GM12878 (cell line): ENCODE measurements at regions of chr14 and their contacts with region 1.

Region 1: DNA sequence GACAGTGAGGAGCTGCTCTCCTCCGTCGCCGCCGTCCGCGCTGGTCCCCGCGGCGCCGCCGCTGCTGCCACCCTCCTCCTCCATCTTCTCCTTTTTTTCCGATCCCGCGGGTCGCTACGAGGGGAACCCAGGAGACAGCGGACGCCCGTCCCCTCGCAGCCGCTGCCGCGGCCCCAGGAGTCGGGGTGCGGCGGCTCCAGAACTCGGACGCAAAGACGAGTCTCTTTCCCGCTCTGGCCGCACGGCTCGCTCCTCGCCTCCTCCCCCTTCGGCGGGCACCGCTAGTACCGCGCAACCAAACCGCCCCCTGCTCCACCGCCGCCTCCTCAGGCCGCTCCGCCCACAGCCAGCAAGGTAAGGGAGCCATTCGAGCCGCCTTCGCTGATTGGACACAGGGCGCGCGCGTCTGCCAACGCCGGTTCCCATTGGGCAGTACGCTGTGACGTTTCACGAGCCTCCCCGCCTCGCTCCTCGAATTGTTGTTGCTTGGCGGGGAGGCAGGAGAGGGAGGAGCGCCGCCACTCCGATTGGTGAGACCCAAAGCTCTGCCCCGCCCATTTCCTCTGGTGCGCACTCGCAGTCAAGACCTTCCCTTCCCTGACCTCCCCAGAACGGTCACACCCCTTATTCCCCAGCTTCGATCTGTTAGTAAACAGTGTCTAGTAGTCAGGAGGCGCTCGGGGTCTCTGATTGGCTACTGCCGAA is at the start of gene RPS6KA5:
- DNase-seq: peak; percentile 100
- ATAC-seq: peak; percentile 90
- H3K4me3 ChIP-seq: peak within 1 kb of the TSS; percentile 87
- H3K27ac ChIP-seq: peak within 1 kb of the TSS; percentile 72
- H3K4me1 ChIP-seq: peaks cover 11% of the 10 kb centered on the region
- H3K27me3 ChIP-seq: no peaks in the 10 kb centered on the region
- CTCF ChIP-seq: no peak; a peak in 2 of 6 replicates
- EP300 ChIP-seq: peak in 1 of 2 experiments; percentile 53; a peak in 2 of 4 replicates
- POLR2A ChIP-seq: peak; percentile 75
- RAD21 ChIP-seq: no peak
- polyA plus RNA-seq, gene RPS6KA5: 1.4 to 1.5 TPM

Region 2: DNA sequence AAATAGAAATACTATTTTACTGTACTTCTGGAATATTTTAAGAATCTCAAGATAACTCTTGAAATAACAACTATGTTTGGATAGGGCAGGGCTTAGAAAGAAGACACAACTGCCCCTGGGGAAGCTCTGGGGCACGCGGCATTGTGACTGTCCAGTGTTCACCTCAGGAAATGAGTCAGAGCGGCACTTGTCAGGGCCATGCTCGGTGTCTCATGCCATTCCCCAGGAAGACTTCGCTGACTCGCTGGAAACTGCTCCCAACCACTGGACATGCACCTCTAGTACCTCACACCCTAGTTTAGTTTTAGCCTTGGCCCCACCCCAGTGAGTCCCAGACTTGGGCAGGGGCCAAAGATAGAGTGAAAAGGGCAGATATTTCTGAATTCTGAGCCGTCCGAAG is 436.3 kb before region 1 on chr14:
- CTCF ChIA-PET with region 1: no interaction called
- POLR2A ChIA-PET with region 1: no interaction called
- RAD21 ChIA-PET with region 1: no interaction called
- SMC1A ChIA-PET with region 1: no interaction called
- in situ Hi-C with region 1: no loop called
- intact Hi-C with region 1: no loop called
- DNase-seq: no peak
- ATAC-seq: no peak
- H3K4me3 ChIP-seq: no peak overlapping the region
- H3K27ac ChIP-seq: no peak overlapping the region
- H3K4me1 ChIP-seq: no peaks in the 10 kb centered on the region
- H3K27me3 ChIP-seq: peaks cover 0 to 3% of the 10 kb centered on the region in 2 experiments; a peak in 2 of 4 replicates
- CTCF ChIP-seq: no peak
- EP300 ChIP-seq: no peak
- POLR2A ChIP-seq: no peak
- RAD21 ChIP-seq: no peak

Region 3: DNA sequence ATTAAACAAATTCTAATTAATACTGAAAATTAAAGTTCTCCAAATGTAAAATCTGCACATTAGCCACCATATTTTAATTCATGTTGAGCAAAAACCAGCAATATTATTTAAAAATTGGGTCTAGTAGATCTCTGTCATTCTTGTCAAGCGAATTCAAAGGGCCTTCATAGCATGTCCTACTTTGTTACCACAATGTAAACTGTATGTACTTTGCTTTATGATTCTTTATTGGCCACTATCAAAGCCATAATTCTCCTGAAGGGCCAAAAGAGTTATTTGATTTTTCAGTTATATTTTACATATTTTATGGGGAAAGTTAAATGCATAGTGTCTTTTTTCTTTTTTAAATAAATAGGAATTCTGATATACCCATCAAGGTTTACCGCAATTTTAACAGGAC is 118.0 kb before region 1 on chr14:
- CTCF ChIA-PET with region 1: no interaction called
- POLR2A ChIA-PET with region 1: no interaction called
- RAD21 ChIA-PET with region 1: no interaction called
- SMC1A ChIA-PET with region 1: no interaction called
- in situ Hi-C with region 1: no loop called
- intact Hi-C with region 1: no loop called
- DNase-seq: no peak
- ATAC-seq: no peak
- H3K4me3 ChIP-seq: no peak overlapping the region
- H3K27ac ChIP-seq: no peak overlapping the region
- H3K4me1 ChIP-seq: no peaks in the 10 kb centered on the region
- H3K27me3 ChIP-seq: no peaks in the 10 kb centered on the region
- CTCF ChIP-seq: no peak
- EP300 ChIP-seq: no peak
- POLR2A ChIP-seq: no peak
- RAD21 ChIP-seq: no peak

Region 4: DNA sequence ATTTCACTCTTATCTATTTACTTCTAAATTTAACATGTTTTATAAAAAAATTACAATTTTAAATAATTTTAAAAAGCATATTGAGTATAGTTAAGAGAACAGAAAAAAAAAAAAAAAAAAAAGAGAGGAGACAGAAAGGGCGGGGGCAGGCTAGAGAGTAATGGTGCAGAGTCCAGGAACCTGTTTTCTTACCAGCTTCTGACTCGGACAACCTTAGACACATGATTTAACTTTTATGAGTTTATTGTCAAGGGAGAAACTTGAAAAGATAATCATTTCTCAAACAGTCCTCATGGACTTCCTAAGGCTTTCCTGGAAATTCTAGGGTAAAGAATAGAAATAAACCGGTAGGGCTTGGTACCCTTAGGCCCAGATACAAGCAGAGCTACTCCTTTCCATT is 84.4 kb before region 1 on chr14:
- CTCF ChIA-PET with region 1: no interaction called
- POLR2A ChIA-PET with region 1: no interaction called
- RAD21 ChIA-PET with region 1: no interaction called
- SMC1A ChIA-PET with region 1: no interaction called
- in situ Hi-C with region 1: no loop called
- intact Hi-C with region 1: no loop called
- DNase-seq: no peak
- ATAC-seq: no peak
- H3K4me3 ChIP-seq: no peak overlapping the region
- H3K27ac ChIP-seq: no peak overlapping the region
- H3K4me1 ChIP-seq: no peaks in the 10 kb centered on the region
- H3K27me3 ChIP-seq: no peaks in the 10 kb centered on the region
- CTCF ChIP-seq: no peak
- EP300 ChIP-seq: no peak
- POLR2A ChIP-seq: no peak
- RAD21 ChIP-seq: no peak

Region 5: GRCh38 chr14:91009501-91010152 is 50.9 kb before region 1 on chr14:
- CTCF ChIA-PET with region 1: interaction called, 14 read pairs
- POLR2A ChIA-PET with region 1: interaction called, 16 read pairs
- RAD21 ChIA-PET with region 1: interaction called, 16 read pairs
- SMC1A ChIA-PET with region 1: interaction called, 24 read pairs
- in situ Hi-C with region 1: no loop called
- intact Hi-C with region 1: loop called (anchors 5 kb)
- DNase-seq: peak; percentile 85
- ATAC-seq: peak; percentile 92
- H3K4me3 ChIP-seq: peak overlapping the region; percentile 37
- H3K27ac ChIP-seq: peak overlapping the region; percentile 78
- H3K4me1 ChIP-seq: peaks cover 30% of the 10 kb centered on the region
- H3K27me3 ChIP-seq: no peaks in the 10 kb centered on the region
- CTCF ChIP-seq: no peak
- EP300 ChIP-seq: peak; percentile 23 to 32; a peak in 1 of 4 replicates
- POLR2A ChIP-seq: no peak
- RAD21 ChIP-seq: peak; percentile 2; the same call in 1 of the 2 replicates

Region 6: DNA sequence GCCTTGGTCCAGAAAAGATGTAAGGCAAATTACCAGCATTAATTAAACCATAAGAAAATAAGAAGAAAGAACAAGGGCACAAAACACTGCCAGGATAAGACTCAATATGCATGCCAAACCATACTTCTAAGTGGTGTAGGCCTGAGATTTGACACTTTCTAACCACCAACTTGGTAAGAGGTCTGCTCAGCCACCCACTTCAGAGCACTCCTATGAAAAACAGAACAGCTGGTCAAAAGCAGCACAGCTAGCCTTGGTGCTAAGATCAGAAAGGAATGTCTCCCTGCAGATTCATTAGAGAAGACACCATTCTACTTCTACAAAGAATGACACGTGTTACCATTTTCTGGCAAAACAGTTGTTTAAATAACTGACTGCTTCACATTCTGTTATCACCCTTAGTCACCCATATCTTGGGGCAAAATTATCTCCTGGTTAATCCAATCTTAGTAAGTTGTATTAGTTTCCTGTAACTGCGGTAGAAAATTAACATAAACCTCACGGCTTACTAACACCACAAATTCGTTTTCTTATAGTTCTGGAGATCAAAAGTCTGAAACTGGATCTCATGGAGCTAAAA is 13.2 kb before region 1 on chr14:
- CTCF ChIA-PET with region 1: interaction called, 10 read pairs
- POLR2A ChIA-PET with region 1: interaction called, 4 read pairs
- RAD21 ChIA-PET with region 1: interaction called, 7 read pairs
- SMC1A ChIA-PET with region 1: interaction called, 16 read pairs
- in situ Hi-C with region 1: no loop called
- intact Hi-C with region 1: no loop called
- DNase-seq: no peak
- ATAC-seq: peak; percentile 85
- H3K4me3 ChIP-seq: no peak overlapping the region
- H3K27ac ChIP-seq: no peak overlapping the region
- H3K4me1 ChIP-seq: no peaks in the 10 kb centered on the region
- H3K27me3 ChIP-seq: no peaks in the 10 kb centered on the region
- CTCF ChIP-seq: no peak
- EP300 ChIP-seq: no peak
- POLR2A ChIP-seq: no peak
- RAD21 ChIP-seq: no peak

Region 7: GRCh38 chr14:91114079-91115065 is 53.9 kb after region 1 on chr14:
- CTCF ChIA-PET with region 1: interaction called, 20 read pairs
- POLR2A ChIA-PET with region 1: interaction called, 94 read pairs
- RAD21 ChIA-PET with region 1: interaction called, 63 read pairs
- SMC1A ChIA-PET with region 1: interaction called, 68 read pairs
- in situ Hi-C with region 1: no loop called
- intact Hi-C with region 1: loop called (anchors 1 kb)
- DNase-seq: peak; percentile 86
- ATAC-seq: peak; percentile 88
- H3K4me3 ChIP-seq: peak overlapping the region; percentile 100
- H3K27ac ChIP-seq: peak overlapping the region; percentile 98
- H3K4me1 ChIP-seq: peaks cover 20% of the 10 kb centered on the region
- H3K27me3 ChIP-seq: no peaks in the 10 kb centered on the region
- CTCF ChIP-seq: no peak
- EP300 ChIP-seq: 0 out of 4 replicates have a peak, but pooled peaks of 1 of the 2 experiments have one; percentile 9
- POLR2A ChIP-seq: peak; percentile 82
- RAD21 ChIP-seq: 0 out of 2 replicates have a peak, but pooled peaks have one; percentile 2

Region 8: DNA sequence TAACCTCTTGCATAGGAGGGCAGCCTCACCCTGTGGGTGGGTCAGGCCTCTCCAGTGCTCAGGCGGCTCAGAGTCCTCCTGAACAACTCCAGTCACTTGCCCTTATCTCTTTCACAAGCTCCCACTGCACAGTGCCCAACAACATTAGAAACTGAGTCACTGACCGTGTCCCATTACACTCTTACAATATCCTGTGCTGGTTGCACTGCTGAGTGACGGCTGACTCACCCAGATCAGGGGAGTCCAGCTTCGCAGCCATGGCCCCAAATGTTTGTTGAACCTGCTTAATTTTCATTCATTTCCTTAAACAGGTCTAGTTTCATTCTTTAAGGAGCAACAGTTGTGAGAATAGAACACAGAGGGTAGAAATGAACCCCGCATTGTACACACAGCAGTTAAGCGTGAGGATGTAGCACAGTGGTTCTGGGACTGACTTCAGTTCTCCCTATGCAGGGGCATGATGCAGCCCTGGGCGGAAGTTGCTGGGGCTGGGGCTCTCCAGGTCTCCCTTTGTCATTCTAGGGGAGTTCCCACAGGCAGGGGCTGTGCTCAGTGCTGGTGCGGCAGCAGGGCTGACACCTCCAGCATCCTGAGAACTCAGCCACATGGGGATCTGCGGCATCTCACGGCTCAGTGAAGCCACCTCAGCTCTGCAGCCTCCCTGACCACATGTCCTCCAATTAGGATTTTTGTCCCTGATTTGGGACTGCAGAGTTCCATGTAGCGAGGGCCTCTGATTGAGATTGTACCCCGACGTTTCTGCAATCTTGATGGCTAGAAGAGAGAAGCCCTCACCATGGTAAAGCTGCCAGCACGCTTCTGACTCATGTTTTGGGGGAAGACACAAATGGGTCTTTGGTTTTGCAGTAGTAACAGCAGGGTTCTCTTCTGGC is 167.9 kb after region 1 on chr14:
- CTCF ChIA-PET with region 1: no interaction called
- POLR2A ChIA-PET with region 1: no interaction called
- RAD21 ChIA-PET with region 1: no interaction called
- SMC1A ChIA-PET with region 1: no interaction called
- in situ Hi-C with region 1: no loop called
- intact Hi-C with region 1: no loop called
- DNase-seq: peak; percentile 86
- ATAC-seq: peak; percentile 89
- H3K4me3 ChIP-seq: 0 out of 2 replicates have a peak overlapping the region, but pooled peaks have one; percentile 4
- H3K27ac ChIP-seq: peak overlapping the region; percentile 92
- H3K4me1 ChIP-seq: peaks cover 53% of the 10 kb centered on the region
- H3K27me3 ChIP-seq: no peaks in the 10 kb centered on the region
- CTCF ChIP-seq: no peak
- EP300 ChIP-seq: peak; percentile 37 to 78; a peak in 2 of 4 replicates
- POLR2A ChIP-seq: peak; percentile 63
- RAD21 ChIP-seq: no peak